ENCODE measurements at regions of chr7 and their contacts with region 1.

Region 1: DNA sequence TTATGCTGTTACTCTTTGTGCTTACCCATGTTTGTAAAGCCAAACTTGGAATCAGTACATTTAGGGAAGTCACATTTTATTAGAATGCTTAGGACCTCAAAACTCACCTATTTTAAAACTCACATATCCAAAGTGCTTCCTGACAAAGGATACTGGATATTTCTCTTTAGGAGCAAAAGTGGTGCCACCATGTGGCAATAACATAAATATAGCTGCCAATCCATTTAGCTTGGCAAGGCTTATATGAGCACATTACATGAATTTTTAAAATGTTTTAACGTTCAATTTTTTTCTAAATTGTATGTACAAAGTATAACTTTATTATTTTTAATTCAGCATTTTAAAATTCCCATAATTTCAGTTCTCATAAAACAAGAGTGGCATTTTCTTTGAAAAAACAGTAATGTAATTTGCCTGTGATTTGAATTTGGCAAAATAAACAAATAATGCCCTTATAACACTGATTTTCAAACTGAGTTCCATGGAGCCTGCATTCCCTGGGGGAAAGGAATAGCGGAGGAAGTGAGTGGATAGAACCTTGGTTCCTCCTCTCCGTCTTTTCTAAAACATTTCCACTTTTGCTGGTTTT is 75.4 kb downstream of the HDAC9 start:
- DNase-seq: no peak
- H3K4me3 Mint-ChIP-seq: no peak overlapping the region
- H3K27ac Mint-ChIP-seq: no peak overlapping the region
- H3K4me1 Mint-ChIP-seq: no peaks in the 10 kb centered on the region
- H3K27me3 Mint-ChIP-seq: no peaks in the 10 kb centered on the region

Region 2: DNA sequence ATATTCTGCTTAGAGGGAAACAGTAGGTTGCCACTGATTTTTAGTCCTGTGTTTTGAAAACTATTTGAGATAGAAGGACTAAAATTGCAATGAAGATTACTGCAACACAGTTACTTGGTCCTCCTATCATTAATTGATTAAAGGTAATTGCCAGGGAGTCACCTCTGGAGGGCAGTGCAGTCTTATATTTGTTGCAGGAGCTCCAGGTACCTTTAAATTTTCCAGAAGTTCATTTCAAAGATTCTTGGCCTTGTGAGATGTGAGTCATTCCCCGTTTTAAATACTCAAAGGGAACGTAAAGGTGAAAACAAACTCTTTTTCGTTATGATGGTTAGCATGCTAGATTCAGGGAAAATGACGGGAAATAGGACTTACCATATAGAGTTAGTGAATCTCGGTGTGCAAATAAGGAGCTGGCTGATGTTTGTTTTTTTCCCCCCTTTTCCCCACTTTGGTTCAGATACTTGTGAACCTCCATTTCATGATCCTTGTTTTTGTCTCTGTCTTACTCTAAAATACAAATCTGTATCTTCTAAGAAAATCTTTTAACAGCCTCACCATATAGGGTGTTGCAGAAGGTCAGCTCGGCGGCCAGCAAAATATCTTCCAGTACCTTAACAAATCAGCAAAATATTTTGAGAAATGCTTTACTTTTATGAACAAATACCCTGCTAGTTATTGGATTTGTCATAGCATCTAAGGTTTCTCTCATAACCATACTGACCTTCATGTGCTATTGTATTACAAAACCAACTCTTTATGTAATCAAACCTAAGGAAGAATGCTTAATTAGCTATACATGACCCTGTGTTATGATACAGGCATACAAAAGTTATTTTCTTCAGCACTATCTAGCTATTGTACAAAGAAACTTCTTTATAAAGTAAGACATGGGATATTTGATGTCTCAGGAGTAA is 218.4 kb before region 1 on chr7:
- CTCF ChIA-PET with region 1: interaction called, 3 read pairs
- POLR2A ChIA-PET with region 1: no interaction called
- intact Hi-C with region 1: loop called (anchors 2 kb)
- DNase-seq: peak; percentile 25
- H3K4me3 Mint-ChIP-seq: no peak overlapping the region
- H3K27ac Mint-ChIP-seq: no peak overlapping the region
- H3K4me1 Mint-ChIP-seq: peaks cover 3% of the 10 kb centered on the region
- H3K27me3 Mint-ChIP-seq: peaks cover 3% of the 10 kb centered on the region

Region 3: GRCh38 chr7:18530224-18531179 is 40.5 kb before region 1 on chr7:
- CTCF ChIA-PET with region 1: no interaction called
- POLR2A ChIA-PET with region 1: no interaction called
- intact Hi-C with region 1: no loop called
- DNase-seq: no peak
- H3K4me3 Mint-ChIP-seq: no peak overlapping the region
- H3K27ac Mint-ChIP-seq: no peak overlapping the region
- H3K4me1 Mint-ChIP-seq: no peaks in the 10 kb centered on the region
- H3K27me3 Mint-ChIP-seq: no peaks in the 10 kb centered on the region

Region 4: DNA sequence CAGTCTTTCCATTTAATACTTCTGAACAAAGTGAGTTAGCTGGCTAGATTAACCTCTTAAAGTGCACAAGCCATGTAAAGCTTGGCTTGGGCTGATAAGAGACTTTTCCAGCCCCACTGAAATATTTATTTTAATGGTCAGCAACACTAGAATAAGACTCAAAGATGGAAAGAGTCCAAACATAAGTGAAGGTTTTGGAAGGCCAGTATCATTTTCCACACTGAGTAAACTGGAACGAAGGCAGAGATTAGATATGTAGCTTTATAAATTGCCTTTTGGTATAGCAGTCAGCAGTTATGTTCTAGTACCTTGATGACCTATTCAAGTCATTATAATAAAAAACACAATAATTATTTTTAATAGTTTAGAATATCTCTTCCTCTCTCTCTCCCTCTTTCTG is 26.8 kb after region 1 on chr7:
- CTCF ChIA-PET with region 1: no interaction called
- POLR2A ChIA-PET with region 1: no interaction called
- intact Hi-C with region 1: no loop called
- DNase-seq: no peak
- H3K4me3 Mint-ChIP-seq: no peak overlapping the region
- H3K27ac Mint-ChIP-seq: no peak overlapping the region
- H3K4me1 Mint-ChIP-seq: no peaks in the 10 kb centered on the region
- H3K27me3 Mint-ChIP-seq: no peaks in the 10 kb centered on the region

Measured in activated CD4-positive, alpha-beta memory T cell treated with anti-CD3 and anti-CD28 coated beads for 36 hours (primary cell).